OCI-LY7 (cell line): ENCODE measurements at regions of chr3 and their contacts with region 1.

Region 1: DNA sequence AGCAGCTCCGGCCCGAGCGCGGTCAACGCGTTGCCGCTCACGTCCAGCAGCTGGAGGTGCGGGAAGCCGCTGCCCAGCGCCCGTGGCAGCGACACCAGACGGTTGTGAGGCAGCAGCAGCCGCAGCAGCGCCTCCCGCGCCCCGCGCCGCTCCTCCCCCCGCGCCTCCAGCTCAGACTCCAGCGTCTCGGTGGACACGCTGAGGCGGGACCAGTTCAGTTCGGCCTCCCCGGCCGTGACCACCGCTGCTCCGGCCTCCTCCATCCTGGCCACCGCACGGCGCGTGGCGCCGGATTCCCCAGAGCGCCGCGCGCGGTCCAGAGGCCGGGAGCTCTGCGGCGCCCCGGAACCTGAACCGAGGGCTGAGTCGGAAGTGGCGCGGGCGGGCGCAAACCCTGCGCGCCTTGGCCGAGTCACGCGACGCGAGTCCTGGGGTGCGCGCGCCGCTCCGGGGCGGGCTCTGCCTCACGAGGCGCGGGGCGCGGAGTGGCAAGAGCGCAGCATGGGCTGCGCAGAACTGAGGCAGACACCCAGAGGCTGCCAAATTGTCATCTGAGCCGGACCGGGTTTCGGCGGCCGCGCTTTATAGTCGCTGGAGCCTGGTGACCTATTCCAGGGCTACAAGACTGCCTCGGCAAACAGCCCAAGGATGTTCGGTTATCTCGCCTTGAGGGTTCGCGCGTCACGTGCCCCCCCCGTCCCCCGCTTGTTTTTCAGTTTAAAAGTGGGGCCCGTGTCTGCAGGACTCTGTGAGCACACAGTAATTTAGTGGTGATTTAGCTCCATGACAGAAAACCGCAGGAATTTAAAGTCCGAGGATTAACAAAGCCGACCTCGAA is at the start of gene LRRC58:
- DNase-seq: peak; percentile 94
- H3K4me3 ChIP-seq: peak within 1 kb of the TSS; percentile 88
- H3K27ac ChIP-seq: peak within 1 kb of the TSS; percentile 69
- H3K4me1 ChIP-seq: peaks cover 26% of the 10 kb centered on the region
- CTCF ChIP-seq: peak; percentile 64
- total RNA-seq, gene LRRC58: 21.5 and 24.1 TPM in 2 replicates

Region 2: GRCh38 chr3:120742198-120742849 is 393.1 kb after region 1 on chr3 and contains the starts of genes GTF2E1 and RABL3:
- CTCF ChIA-PET with region 1: no interaction called
- POLR2A ChIA-PET with region 1: no interaction called
- intact Hi-C with region 1: loop called (anchors 5 kb)
- DNase-seq: peak; percentile 99
- H3K4me3 ChIP-seq: peak within 1 kb of the TSS; percentile 99
- H3K27ac ChIP-seq: peak within 1 kb of the TSS; percentile 86
- H3K4me1 ChIP-seq: peaks cover 25% of the 10 kb centered on the region
- CTCF ChIP-seq: no peak
- total RNA-seq, gene GTF2E1: 14.8 and 16.3 TPM in 2 replicates
- total RNA-seq, gene RABL3: 7.7 and 15.7 TPM in 2 replicates